Naive thymus-derived CD4-positive, alpha-beta T cell (primary cell): ENCODE measurements at regions of chr2 and their contacts with region 1.

Region 1: GRCh38 chr2:204931562-204931961 is 386.3 kb downstream of the PARD3B start:
- DNase-seq: no peak
- ATAC-seq: no peak
- H3K4me3 ChIP-seq: no peak overlapping the region
- H3K4me3 Mint-ChIP-seq: no peak overlapping the region
- H3K27ac ChIP-seq: no peak overlapping the region
- H3K27ac Mint-ChIP-seq: no peak overlapping the region
- H3K4me1 ChIP-seq: no peaks in the 10 kb centered on the region
- H3K4me1 Mint-ChIP-seq: peaks cover 3 to 29% (median 21%) of the 10 kb centered on the region in 7 donors
- H3K27me3 ChIP-seq: no peaks in the 10 kb centered on the region
- H3K27me3 Mint-ChIP-seq: peaks cover 0 to 5% (median 0%) of the 10 kb centered on the region in 5 donors

Region 2: DNA sequence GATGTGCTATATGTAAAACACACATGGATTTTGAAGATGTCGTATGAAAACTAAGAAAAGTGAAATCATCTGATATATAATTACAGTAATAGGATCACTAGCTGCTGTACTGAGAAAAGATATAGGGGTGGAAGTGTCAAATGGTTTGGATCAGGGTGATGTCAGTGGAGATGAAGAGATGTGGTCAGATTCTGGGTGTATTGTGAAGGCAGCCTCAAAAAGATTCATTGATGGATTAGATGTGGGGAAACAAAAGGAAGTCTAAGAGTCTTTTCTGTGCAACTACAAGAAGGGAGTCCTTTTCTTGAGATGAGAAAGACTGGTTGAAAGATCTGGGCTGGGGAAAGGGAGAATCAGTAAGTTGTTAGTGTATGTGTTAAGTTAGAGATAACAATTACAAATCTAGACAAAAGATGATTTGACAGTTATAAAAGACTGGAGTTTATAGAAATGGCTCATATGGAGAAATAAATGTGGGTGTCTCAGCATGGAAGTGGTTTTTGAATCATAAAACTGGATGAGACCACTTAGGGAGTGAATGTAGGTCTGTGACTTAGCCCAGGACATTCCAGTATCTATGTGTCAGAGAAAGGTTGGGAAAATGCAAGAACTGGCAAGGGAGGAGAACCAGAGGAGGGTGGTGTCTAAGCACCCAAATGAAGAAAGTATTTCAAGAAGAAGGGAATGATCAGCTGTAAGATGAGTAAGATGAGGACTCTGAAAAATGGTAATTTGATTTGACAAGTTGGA is 38.9 kb before region 1 on chr2:
- CTCF ChIA-PET with region 1: no interaction called
- POLR2A ChIA-PET with region 1: no interaction called
- intact Hi-C with region 1: loop called in 1 of 2 experiments (anchors 5 kb)
- DNase-seq: no peak
- ATAC-seq: peak; percentile 60
- H3K4me3 ChIP-seq: no peak overlapping the region
- H3K4me3 Mint-ChIP-seq: no peak overlapping the region
- H3K27ac ChIP-seq: no peak overlapping the region
- H3K27ac Mint-ChIP-seq: no peak overlapping the region
- H3K4me1 ChIP-seq: peaks cover 0 to 19% of the 10 kb centered on the region in 2 donors
- H3K4me1 Mint-ChIP-seq: peaks cover 4 to 19% (median 11%) of the 10 kb centered on the region in 7 donors
- H3K27me3 ChIP-seq: no peaks in the 10 kb centered on the region
- H3K27me3 Mint-ChIP-seq: no peaks in the 10 kb centered on the region

Region 3: DNA sequence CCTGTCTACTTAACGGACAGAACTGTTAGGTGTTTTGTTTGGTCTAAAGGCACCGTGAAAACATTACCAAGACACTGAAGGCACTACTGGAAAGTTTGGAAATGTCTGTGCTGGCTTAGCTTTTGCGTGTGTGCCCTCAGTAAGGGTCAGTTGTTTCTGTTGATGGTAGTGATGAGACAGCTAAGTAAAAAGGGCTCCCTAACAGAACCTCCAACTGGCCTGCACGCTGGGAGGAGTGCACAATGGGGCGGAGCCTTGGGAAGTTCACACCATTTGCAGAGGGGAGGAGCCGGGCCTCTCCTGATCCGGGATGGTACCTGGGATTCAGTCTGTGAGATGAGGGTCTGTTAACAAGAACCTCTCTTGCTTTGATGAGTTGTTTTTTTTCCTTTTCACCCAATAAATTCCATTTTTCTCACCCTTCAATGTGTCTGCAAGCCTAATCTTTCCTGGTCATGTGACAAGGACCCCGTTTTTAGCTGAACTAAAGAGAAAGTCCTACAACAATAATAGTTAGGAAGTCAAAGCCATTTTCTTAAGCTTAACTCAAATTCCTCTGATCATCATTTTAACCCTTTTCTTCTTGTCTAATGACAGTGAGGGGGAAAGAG is 17.6 kb before region 1 on chr2:
- CTCF ChIA-PET with region 1: no interaction called
- POLR2A ChIA-PET with region 1: no interaction called
- intact Hi-C with region 1: loop called in 1 of 2 experiments (anchors 2 kb)
- DNase-seq: no peak
- ATAC-seq: no peak
- H3K4me3 ChIP-seq: no peak overlapping the region
- H3K4me3 Mint-ChIP-seq: no peak overlapping the region
- H3K27ac ChIP-seq: no peak overlapping the region
- H3K27ac Mint-ChIP-seq: peak overlapping the region in 1 of 9 donors; percentile 83
- H3K4me1 ChIP-seq: no peaks in the 10 kb centered on the region
- H3K4me1 Mint-ChIP-seq: peaks cover 4 to 15% (median 5%) of the 10 kb centered on the region in 7 donors
- H3K27me3 ChIP-seq: no peaks in the 10 kb centered on the region
- H3K27me3 Mint-ChIP-seq: peaks cover 0 to 4% (median 0%) of the 10 kb centered on the region in 5 donors

Region 4: DNA sequence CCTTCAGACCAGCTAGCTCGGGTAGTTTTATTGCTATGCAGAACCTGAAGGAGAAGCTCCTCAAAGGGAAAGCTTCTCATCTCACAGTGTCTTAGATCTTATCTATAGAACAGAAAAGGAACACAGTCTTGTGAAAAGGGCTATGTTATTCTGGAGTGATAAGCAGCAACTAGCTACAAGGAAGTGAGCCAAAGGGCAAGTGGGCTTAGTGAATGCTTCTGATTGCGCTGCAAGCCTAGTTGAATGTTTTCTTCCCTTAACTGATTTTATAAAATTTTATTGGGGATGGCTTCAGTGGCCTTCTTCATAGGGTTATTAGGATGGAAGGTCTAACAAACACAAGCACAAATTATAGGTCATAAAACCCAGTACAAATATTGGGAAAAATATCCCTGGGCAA is 13.8 kb after region 1 on chr2:
- CTCF ChIA-PET with region 1: interaction called, 3 read pairs
- POLR2A ChIA-PET with region 1: interaction called, 7 read pairs
- intact Hi-C with region 1: loop called in 1 of 2 experiments (anchors 1 kb)
- DNase-seq: peak in 3 of 9 donors; percentile 8 to 21 (median 15)
- ATAC-seq: no peak
- H3K4me3 ChIP-seq: no peak overlapping the region
- H3K4me3 Mint-ChIP-seq: peak overlapping the region in 5 of 10 donors; percentile 4 to 76 (median 41)
- H3K27ac ChIP-seq: no peak overlapping the region
- H3K27ac Mint-ChIP-seq: peak overlapping the region; percentile 39 to 84 (median 61)
- H3K4me1 ChIP-seq: peaks cover 6 to 47% of the 10 kb centered on the region in 2 donors
- H3K4me1 Mint-ChIP-seq: peaks cover 38 to 83% (median 64%) of the 10 kb centered on the region in 7 donors
- H3K27me3 ChIP-seq: no peaks in the 10 kb centered on the region
- H3K27me3 Mint-ChIP-seq: no peaks in the 10 kb centered on the region